ENCODE measurements at regions of chr1 and their contacts with region 1.

Region 1: GRCh38 chr1:193156826-193157142 is 29.6 kb downstream of the B3GALT2 start:
- DNase-seq: no peak
- H3K4me3 Mint-ChIP-seq: no peak overlapping the region
- H3K27ac Mint-ChIP-seq: no peak overlapping the region
- H3K4me1 Mint-ChIP-seq: peaks cover 23% of the 10 kb centered on the region
- H3K27me3 Mint-ChIP-seq: no peaks in the 10 kb centered on the region
- CTCF ChIP-seq: no peak

Region 2: GRCh38 chr1:193143285-193143684 is 13.5 kb before region 1 on chr1:
- CTCF ChIA-PET with region 1: interaction called, 14 read pairs
- POLR2A ChIA-PET with region 1: interaction called, 4 read pairs
- intact Hi-C with region 1: no loop called
- DNase-seq: peak; percentile 35
- H3K4me3 Mint-ChIP-seq: no peak overlapping the region
- H3K27ac Mint-ChIP-seq: no peak overlapping the region
- H3K4me1 Mint-ChIP-seq: no peaks in the 10 kb centered on the region
- H3K27me3 Mint-ChIP-seq: no peaks in the 10 kb centered on the region
- CTCF ChIP-seq: peak; percentile 52

Region 3: GRCh38 chr1:193311226-193311948 is 154.6 kb after region 1 on chr1:
- CTCF ChIA-PET with region 1: no interaction called
- POLR2A ChIA-PET with region 1: no interaction called
- intact Hi-C with region 1: no loop called
- DNase-seq: no peak
- H3K4me3 Mint-ChIP-seq: no peak overlapping the region
- H3K27ac Mint-ChIP-seq: no peak overlapping the region
- H3K4me1 Mint-ChIP-seq: no peaks in the 10 kb centered on the region
- H3K27me3 Mint-ChIP-seq: no peaks in the 10 kb centered on the region
- CTCF ChIP-seq: no peak